ENCODE measurements at regions of chr20 and their contacts with region 1.

Region 1: DNA sequence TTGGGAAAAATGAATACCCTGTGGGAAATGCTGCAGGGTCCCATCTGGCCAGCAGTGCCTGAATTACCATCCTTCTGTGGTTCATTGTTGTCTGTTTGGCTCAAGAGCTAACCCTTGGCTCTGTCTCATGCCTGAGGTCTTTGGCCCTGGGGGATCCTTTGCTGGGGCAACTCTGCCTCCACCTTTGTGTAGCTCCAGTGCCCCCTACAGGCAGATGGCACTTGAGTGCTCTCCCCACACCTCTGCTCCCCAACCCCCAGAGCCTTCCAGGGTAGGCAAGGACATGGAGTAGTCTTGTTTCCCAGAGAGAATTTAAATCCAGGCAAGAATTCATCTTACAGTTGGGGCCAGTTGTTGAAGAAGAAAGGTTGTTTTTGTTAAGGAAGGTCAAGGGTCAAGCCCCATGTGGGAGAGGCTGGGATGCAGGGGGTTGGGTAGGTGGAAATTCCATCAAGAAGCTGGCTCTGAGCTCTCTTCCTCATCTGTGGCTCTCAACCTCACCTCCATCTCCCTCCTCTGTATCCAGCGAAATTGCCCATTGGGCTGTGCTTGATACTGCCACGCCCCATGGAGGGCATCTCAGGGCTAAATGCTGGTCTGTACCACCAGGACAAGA is 44.2 kb downstream of the ZNF831 start:
- DNase-seq: peak; percentile 37 to 91 (median 77)

Region 2: GRCh38 chr20:59094576-59094975 is 113.3 kb before region 1 on chr20:
- intact Hi-C with region 1: loop called (anchors 5 kb)
- DNase-seq: no peak

Region 3: GRCh38 chr20:60206259-60206658 is 998.4 kb after region 1 on chr20:
- intact Hi-C with region 1: no loop called
- DNase-seq: peak in 1 of 42 donors; percentile 17

Measured in head of caudate nucleus (tissue), 42 donors.